ENCODE measurements at regions of chr15 and their contacts with region 1.

Region 1: GRCh38 chr15:31128919-31129768 is 27.6 kb upstream of the TRPM1 start:
- DNase-seq: peak; percentile 67 to 80
- ATAC-seq: peak; percentile 70 to 94 (median 84)
- H3K4me3 ChIP-seq: peak overlapping the region in 1 of 10 donors; percentile 20
- H3K27ac ChIP-seq: no peak overlapping the region
- H3K4me1 ChIP-seq: peaks cover 0 to 10% (median 6%) of the 10 kb centered on the region in 9 donors
- H3K27me3 ChIP-seq: peaks cover 0 to 5% (median 0%) of the 10 kb centered on the region in 7 donors
- CTCF ChIP-seq: peak; percentile 89 to 100 (median 94)

Region 2: DNA sequence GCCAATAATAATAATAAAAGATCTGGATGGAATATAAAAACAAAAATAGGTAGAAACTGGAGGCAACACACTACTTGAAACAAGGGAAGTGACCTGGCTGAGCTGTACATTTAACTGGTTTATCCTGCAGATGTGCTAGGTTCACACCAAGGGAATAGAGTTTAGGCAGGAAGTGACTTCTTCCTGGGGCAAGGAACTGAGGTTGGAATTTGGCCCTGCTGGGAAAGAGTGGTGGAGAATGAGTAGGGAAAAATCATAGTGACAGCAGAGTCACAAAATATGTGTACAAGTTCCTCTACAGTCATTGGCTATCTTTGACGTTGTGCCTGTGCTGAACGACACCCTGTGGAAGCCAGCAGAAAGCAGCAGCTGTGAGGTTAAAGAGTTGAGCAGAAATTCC is 459.1 kb before region 1 on chr15:
- intact Hi-C with region 1: loop called in 2 of 10 experiments (anchors 5 to 10 kb)
- DNase-seq: no peak
- ATAC-seq: no peak
- H3K4me3 ChIP-seq: no peak overlapping the region
- H3K27ac ChIP-seq: no peak overlapping the region
- H3K4me1 ChIP-seq: no peaks in the 10 kb centered on the region
- H3K27me3 ChIP-seq: no peaks in the 10 kb centered on the region
- CTCF ChIP-seq: no peak

Region 3: GRCh38 chr15:30903497-30904201 is 225.5 kb before region 1 on chr15 and contains the start of gene FAN1:
- intact Hi-C with region 1: loop called in 3 of 10 experiments (anchors 10 kb)
- DNase-seq: peak; percentile 88 to 90
- ATAC-seq: peak; percentile 96 to 100 (median 98)
- H3K4me3 ChIP-seq: peak within 1 kb of the TSS; percentile 50 to 89 (median 79)
- H3K27ac ChIP-seq: peak within 1 kb of the TSS in 9 of 10 donors; percentile 66 to 90 (median 84)
- H3K4me1 ChIP-seq: peaks cover 0 to 36% (median 17%) of the 10 kb centered on the region in 9 donors
- H3K27me3 ChIP-seq: no peaks in the 10 kb centered on the region
- CTCF ChIP-seq: peak in 1 of 9 donors; percentile 12
- total RNA-seq, gene FAN1: 8.2 to 28.0 (median 16.9) TPM

Region 4: GRCh38 chr15:30962079-30962478 is 167.1 kb before region 1 on chr15:
- intact Hi-C with region 1: loop called in 1 of 10 experiments (anchors 5 kb)
- DNase-seq: no peak
- ATAC-seq: peak in 5 of 8 donors; percentile 20 to 69 (median 42)
- H3K4me3 ChIP-seq: no peak overlapping the region
- H3K27ac ChIP-seq: peak overlapping the region in 2 of 10 donors; percentile 2 to 19
- H3K4me1 ChIP-seq: peaks cover 0 to 18% (median 14%) of the 10 kb centered on the region in 9 donors
- H3K27me3 ChIP-seq: no peaks in the 10 kb centered on the region
- CTCF ChIP-seq: no peak

Region 5: GRCh38 chr15:31179693-31180092 is 50.5 kb after region 1 on chr15:
- intact Hi-C with region 1: loop called in 1 of 10 experiments (anchors 10 kb)
- DNase-seq: no peak
- ATAC-seq: no peak
- H3K4me3 ChIP-seq: no peak overlapping the region
- H3K27ac ChIP-seq: no peak overlapping the region
- H3K4me1 ChIP-seq: no peaks in the 10 kb centered on the region
- H3K27me3 ChIP-seq: no peaks in the 10 kb centered on the region
- CTCF ChIP-seq: no peak

Measured in heart right ventricle (tissue), 16 donors.